Activated CD4-positive, alpha-beta T cell treated with anti-CD3 and anti-CD28 coated beads, Interleukin-2, amount 10 ng/mL, durations not matched to agents 24 days and 14 days (primary cell): ENCODE measurements at regions of chr3 and their contacts with region 1.

Region 1: DNA sequence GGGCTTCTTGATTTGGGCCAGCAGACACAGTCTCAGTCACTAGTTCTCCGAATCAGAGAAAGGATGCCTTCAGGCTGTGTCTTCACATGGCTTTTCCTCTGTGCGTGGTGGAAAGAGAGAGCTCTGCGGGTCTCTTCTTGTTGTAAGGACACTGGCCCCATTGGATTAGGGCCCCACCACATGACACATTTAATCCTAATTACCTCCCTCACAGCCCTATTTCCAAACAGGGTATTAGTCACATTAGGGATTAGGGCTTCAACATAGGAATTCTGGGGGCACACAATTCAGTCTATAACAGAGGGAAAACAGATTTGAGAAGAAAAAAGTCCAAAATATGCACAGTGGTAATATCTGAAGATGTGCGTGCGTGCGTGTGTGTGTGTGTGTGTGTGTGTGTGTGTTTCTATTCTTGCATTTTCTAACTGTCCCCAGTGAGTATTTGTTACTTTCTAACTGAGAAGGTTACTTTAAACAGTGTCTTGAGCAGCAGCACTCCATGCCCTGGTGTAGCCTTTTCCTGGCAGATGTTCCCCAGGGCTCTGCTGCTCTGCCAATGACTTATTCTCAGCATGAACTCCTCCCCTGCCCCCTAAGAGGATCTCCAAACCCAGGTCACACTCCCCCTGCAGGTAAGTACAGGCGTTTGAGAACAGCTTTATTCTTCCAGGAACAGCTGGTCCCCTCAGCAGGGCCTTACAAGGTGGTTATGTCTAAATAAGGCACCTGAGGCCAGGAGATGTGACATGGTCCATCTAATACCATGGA is 72.9 kb downstream of the RPL39L start:
- DNase-seq: peak; percentile 83
- H3K4me3 Mint-ChIP-seq: no peak overlapping the region
- H3K27ac Mint-ChIP-seq: peak overlapping the region; percentile 79
- H3K4me1 Mint-ChIP-seq: peaks cover 52% of the 10 kb centered on the region
- H3K27me3 Mint-ChIP-seq: no peaks in the 10 kb centered on the region

Region 2: GRCh38 chr3:187031934-187032333 is 34.5 kb before region 1 on chr3:
- intact Hi-C with region 1: loop called (anchors 2 kb)
- DNase-seq: no peak
- H3K4me3 Mint-ChIP-seq: peak overlapping the region; percentile 61
- H3K27ac Mint-ChIP-seq: peak overlapping the region; percentile 70
- H3K4me1 Mint-ChIP-seq: peaks cover 56% of the 10 kb centered on the region
- H3K27me3 Mint-ChIP-seq: no peaks in the 10 kb centered on the region